A673 (cell line): ENCODE measurements at regions of chr7 and their contacts with region 1.

Region 1: DNA sequence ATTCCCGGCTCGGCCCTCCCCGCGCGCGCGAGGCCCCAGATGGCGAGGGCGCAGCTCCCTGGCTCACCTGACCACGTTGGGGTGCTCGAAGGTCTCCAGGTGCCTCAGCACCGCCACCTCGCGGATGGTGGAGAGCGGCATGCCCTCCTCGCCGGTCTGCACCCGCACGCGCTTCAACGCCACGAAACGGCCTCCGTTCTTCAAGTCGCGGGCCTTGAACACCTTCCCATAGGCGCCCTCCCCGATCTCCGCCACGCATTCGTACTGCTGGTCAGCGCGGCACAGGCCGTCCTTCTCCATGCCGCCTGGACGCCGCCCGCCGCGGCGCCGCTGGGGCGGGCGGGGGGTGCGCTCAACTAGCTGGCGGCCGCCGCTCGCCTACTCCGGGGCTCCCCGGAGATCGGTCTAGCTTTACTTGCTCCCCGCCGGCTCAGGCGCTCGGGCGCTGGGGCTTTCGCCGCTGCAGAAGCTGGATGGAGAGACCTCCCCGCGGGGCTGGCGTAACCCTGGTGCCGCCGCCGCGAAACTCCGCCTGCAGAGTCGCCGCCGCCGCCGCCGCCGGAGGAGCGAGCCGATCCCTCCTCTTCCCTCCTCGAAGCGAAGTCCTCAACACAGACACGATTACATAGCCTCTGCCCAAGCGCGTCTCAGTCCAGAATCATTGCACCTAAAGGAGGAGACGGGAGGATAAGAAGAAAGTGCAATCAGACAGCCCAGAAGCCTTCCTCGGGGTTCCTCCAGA is 3.2 kb downstream of the CDK6 start:
- DNase-seq: peak; percentile 89
- H3K4me3 ChIP-seq: peak overlapping the region; percentile 83
- H3K27ac ChIP-seq: peak overlapping the region; percentile 79
- H3K4me1 ChIP-seq: peaks cover 5% of the 10 kb centered on the region
- H3K27me3 ChIP-seq: peaks cover 14% of the 10 kb centered on the region
- CTCF ChIP-seq: peak; percentile 87

Region 2: GRCh38 chr7:92609921-92610518 is 223.2 kb before region 1 on chr7:
- CTCF ChIA-PET with region 1: interaction called, 12 read pairs
- POLR2A ChIA-PET with region 1: no interaction called
- intact Hi-C with region 1: no loop called
- DNase-seq: peak; percentile 58
- H3K4me3 ChIP-seq: no peak overlapping the region
- H3K27ac ChIP-seq: no peak overlapping the region
- H3K4me1 ChIP-seq: no peaks in the 10 kb centered on the region
- H3K27me3 ChIP-seq: no peaks in the 10 kb centered on the region
- CTCF ChIP-seq: peak; percentile 61

Region 3: DNA sequence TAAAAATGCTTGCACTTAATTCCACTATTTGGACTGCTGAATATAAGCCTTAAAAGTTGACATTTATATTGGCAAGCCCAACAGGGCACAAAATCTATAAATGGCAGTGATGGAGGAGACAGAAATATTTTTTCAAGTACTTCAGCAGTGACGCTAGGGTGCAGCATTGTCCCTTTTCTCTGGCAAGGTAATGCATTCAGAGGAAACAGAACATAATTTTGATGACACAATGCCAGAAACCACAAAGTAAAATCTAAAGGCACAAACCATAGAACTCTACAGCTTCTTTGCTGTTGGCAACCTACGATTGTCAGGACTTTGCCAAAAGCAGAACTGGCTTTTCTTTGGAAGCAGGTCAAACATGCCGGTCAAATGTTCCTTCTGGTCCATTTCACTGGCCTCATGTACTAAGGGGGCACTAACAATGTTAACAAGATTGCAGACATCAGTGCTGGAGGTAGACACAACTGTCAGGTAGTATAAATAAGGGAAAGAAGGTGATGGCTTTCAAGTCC is 212.1 kb before region 1 on chr7:
- CTCF ChIA-PET with region 1: interaction called, 3 read pairs
- POLR2A ChIA-PET with region 1: no interaction called
- intact Hi-C with region 1: loop called (anchors 2 kb)
- DNase-seq: peak; percentile 88
- H3K4me3 ChIP-seq: no peak overlapping the region
- H3K27ac ChIP-seq: no peak overlapping the region
- H3K4me1 ChIP-seq: peaks cover 14% of the 10 kb centered on the region
- H3K27me3 ChIP-seq: no peaks in the 10 kb centered on the region
- CTCF ChIP-seq: peak; percentile 83

Region 4: GRCh38 chr7:92717993-92718716 is 115.0 kb before region 1 on chr7:
- CTCF ChIA-PET with region 1: no interaction called
- POLR2A ChIA-PET with region 1: no interaction called
- intact Hi-C with region 1: loop called (anchors 5 kb)
- DNase-seq: peak; percentile 68
- H3K4me3 ChIP-seq: peak overlapping the region; percentile 30
- H3K27ac ChIP-seq: peak overlapping the region; percentile 58
- H3K4me1 ChIP-seq: peaks cover 18% of the 10 kb centered on the region
- H3K27me3 ChIP-seq: no peaks in the 10 kb centered on the region
- CTCF ChIP-seq: no peak

Region 5: DNA sequence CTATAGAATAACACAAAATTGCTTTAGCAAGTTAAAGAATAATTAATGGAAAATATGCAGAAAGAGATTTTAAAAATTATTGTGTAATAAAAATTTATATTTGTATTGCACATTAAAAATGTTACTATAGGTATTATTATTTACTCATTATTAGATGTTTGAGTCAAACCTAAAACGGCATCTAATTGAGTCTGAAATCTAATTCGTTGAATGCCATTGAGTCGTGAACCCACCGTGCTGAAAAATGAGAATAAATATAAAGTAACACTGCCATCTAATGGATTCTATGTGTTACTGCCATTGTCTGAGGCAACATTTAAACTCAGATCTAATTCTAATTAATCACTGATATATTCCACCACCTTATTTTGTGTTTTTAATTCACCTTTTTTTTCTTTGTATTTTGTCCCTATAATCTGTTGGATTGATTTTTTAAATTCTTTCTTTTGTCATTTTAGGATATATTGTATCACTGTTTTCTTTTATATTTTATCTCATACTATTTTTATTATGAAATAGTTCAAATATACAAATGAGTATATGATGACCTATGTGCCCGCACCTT is 222.4 kb after region 1 on chr7:
- CTCF ChIA-PET with region 1: no interaction called
- POLR2A ChIA-PET with region 1: no interaction called
- intact Hi-C with region 1: loop called (anchors 2 kb)
- DNase-seq: peak; percentile 62
- H3K4me3 ChIP-seq: no peak overlapping the region
- H3K27ac ChIP-seq: no peak overlapping the region
- H3K4me1 ChIP-seq: no peaks in the 10 kb centered on the region
- H3K27me3 ChIP-seq: peaks cover 30% of the 10 kb centered on the region
- CTCF ChIP-seq: peak; percentile 80

Region 6: DNA sequence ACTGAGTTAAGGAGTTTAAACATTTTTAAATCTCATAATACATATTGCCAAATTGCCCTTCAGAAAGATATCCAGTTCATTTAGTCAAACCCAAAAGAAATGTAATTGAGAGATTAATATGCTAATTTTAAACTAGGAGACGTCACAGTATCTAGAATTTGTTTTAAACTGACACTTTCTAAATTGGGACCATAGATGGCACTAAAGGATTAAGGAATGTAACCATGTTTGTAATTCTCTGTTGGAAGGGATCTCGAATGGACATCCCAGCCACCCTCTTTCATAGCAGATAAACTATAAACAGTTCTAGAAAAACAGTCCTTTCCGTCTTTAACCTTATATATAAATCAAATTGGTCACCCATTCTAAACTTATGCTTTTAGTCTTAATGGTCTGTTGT is 345.0 kb after region 1 on chr7:
- CTCF ChIA-PET with region 1: no interaction called
- POLR2A ChIA-PET with region 1: no interaction called
- intact Hi-C with region 1: no loop called
- DNase-seq: peak; percentile 16
- H3K4me3 ChIP-seq: no peak overlapping the region
- H3K27ac ChIP-seq: no peak overlapping the region
- H3K4me1 ChIP-seq: no peaks in the 10 kb centered on the region
- H3K27me3 ChIP-seq: peaks cover 12% of the 10 kb centered on the region
- CTCF ChIP-seq: peak; percentile 39; the same call in 1 of the 2 replicates